Esophagus muscularis mucosa (tissue), 4 donors: ENCODE measurements at regions of chr4 and their contacts with region 1.

Region 1: GRCh38 chr4:37928426-37929416 is 31.5 kb upstream of the PTTG2 start:
- DNase-seq: no peak
- H3K4me3 ChIP-seq: no peak overlapping the region
- H3K27ac ChIP-seq: no peak overlapping the region
- H3K4me1 ChIP-seq: peaks cover 9 to 46% (median 32%) of the 10 kb centered on the region in 4 donors
- H3K27me3 ChIP-seq: no peaks in the 10 kb centered on the region
- CTCF ChIP-seq: no peak
- EP300 ChIP-seq: no peak
- POLR2A ChIP-seq: no peak

Region 2: GRCh38 chr4:37812710-37813109 is 116.0 kb before region 1 on chr4:
- intact Hi-C with region 1: no loop called
- DNase-seq: peak; percentile 10
- H3K4me3 ChIP-seq: no peak overlapping the region
- H3K27ac ChIP-seq: no peak overlapping the region
- H3K4me1 ChIP-seq: no peaks in the 10 kb centered on the region
- H3K27me3 ChIP-seq: no peaks in the 10 kb centered on the region
- CTCF ChIP-seq: no peak
- EP300 ChIP-seq: no peak
- POLR2A ChIP-seq: no peak

Region 3: GRCh38 chr4:37837446-37837845 is 91.3 kb before region 1 on chr4:
- intact Hi-C with region 1: no loop called
- DNase-seq: no peak
- H3K4me3 ChIP-seq: no peak overlapping the region
- H3K27ac ChIP-seq: peak overlapping the region; percentile 22 to 47 (median 36)
- H3K4me1 ChIP-seq: peaks cover 6 to 17% (median 12%) of the 10 kb centered on the region in 4 donors
- H3K27me3 ChIP-seq: no peaks in the 10 kb centered on the region
- CTCF ChIP-seq: no peak
- EP300 ChIP-seq: no peak
- POLR2A ChIP-seq: no peak

Region 4: DNA sequence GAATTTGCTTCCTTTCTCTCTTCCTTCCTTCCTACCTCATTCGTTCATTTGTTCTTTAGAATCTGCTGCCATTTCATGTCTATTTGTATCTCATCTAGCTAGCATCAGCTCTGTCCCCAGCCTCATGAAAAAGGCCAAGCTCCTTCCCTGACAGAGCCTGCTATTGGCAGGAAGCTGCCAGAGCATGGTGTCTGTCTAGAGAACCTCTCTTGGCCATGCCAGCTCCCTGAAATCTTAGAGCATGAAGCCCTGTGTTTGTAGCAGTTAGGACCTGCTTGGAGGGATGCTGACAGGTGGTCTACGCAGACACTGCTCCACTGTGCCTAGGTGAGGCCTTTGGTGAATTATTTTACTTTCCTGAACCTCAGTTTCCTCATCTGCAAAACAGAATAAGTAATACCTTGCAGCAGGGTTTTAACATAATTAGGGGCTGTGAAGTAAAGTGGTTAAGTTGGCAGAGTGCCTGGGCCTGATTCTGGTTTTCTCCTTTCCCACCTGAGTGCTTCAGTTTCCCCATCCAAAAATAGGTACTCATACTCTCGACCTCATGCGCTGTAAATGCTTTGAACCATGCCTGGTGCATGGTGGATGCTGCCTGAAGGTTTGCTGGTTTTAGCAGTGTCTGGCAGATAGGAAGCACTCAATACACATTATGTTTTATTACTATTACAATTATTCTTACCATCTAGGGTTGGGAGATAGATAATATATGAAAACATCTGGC is 36.2 kb after region 1 on chr4:
- intact Hi-C with region 1: loop called (anchors 5 kb)
- DNase-seq: no peak
- H3K4me3 ChIP-seq: no peak overlapping the region
- H3K27ac ChIP-seq: no peak overlapping the region
- H3K4me1 ChIP-seq: peaks cover 13 to 41% (median 24%) of the 10 kb centered on the region in 4 donors
- H3K27me3 ChIP-seq: no peaks in the 10 kb centered on the region
- CTCF ChIP-seq: no peak
- EP300 ChIP-seq: no peak
- POLR2A ChIP-seq: no peak

Region 5: DNA sequence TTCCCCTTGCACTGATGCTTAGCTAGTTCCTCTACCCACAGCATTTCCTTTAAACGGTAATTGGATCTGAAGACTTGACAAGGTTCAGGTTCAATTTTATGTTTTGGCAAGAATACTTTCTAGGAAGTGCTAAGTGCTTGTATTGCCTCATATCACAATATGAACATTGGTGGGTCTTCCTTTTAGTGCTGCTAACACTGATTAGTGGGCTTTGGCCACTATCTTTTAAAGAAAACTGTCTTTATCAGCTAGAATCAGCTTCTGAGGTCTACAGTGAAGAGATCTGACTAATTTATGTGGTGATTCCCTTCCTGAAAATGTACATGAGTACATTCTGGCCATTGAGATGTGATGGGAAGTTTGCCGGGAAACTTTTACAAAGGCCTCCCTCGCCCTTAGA is 418.5 kb after region 1 on chr4:
- intact Hi-C with region 1: no loop called
- DNase-seq: no peak
- H3K4me3 ChIP-seq: no peak overlapping the region
- H3K27ac ChIP-seq: no peak overlapping the region
- H3K4me1 ChIP-seq: no peaks in the 10 kb centered on the region
- H3K27me3 ChIP-seq: no peaks in the 10 kb centered on the region
- CTCF ChIP-seq: no peak
- EP300 ChIP-seq: no peak
- POLR2A ChIP-seq: no peak

Region 6: GRCh38 chr4:38815885-38816782 is 887.4 kb after region 1 on chr4:
- intact Hi-C with region 1: no loop called
- DNase-seq: no peak
- H3K4me3 ChIP-seq: no peak overlapping the region
- H3K27ac ChIP-seq: peak overlapping the region in 2 of 4 donors; percentile 17 to 31
- H3K4me1 ChIP-seq: peaks cover 0 to 3% (median 0%) of the 10 kb centered on the region in 4 donors
- H3K27me3 ChIP-seq: no peaks in the 10 kb centered on the region
- CTCF ChIP-seq: no peak
- EP300 ChIP-seq: no peak
- POLR2A ChIP-seq: no peak